Activated CD4-positive, alpha-beta T cell treated with anti-CD3 and anti-CD28 coated beads, Interleukin-2, amount 10 ng/mL, durations not matched to agents 7 days and 5 days (primary cell): ENCODE measurements at regions of chr1 and their contacts with region 1.

Region 1: GRCh38 chr1:11880181-11880575 is 21.4 kb upstream of the NPPB start:
- DNase-seq: no peak
- H3K4me3 Mint-ChIP-seq: no peak overlapping the region
- H3K27ac Mint-ChIP-seq: no peak overlapping the region
- H3K4me1 Mint-ChIP-seq: no peaks in the 10 kb centered on the region
- H3K27me3 Mint-ChIP-seq: peaks cover 2% of the 10 kb centered on the region

Region 2: DNA sequence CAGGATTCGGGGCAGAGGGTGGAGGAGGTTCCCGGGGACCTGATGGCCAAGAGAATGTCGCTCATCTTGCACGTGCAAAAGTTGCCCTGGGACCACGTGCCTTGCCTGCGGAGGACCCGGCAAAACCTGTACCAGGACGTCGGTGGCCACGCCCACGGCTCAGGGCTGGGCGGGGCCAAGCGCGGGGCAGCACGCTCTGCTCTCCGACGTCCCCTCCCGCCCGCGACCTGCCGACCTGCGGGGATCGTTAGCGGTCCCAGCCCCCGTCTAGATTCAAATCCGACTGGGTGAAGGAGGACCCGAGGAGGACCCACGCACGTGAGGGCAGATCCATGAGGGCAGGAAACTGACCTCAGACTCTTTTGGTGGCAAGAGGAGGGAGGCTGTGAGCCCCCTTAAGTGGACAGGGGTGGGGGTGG is 118.2 kb before region 1 on chr1 and contains the start of gene C1orf167:
- CTCF ChIA-PET with region 1: no interaction called
- POLR2A ChIA-PET with region 1: no interaction called
- DNase-seq: peak; percentile 29
- H3K4me3 Mint-ChIP-seq: no peak within 1 kb of the TSS
- H3K27ac Mint-ChIP-seq: no peak within 1 kb of the TSS
- H3K4me1 Mint-ChIP-seq: peaks cover 6% of the 10 kb centered on the region
- H3K27me3 Mint-ChIP-seq: peaks cover 25% of the 10 kb centered on the region
- total RNA-seq, gene C1orf167: not detected

Region 3: GRCh38 chr1:11790880-11791715 is 89.1 kb before region 1 on chr1:
- CTCF ChIA-PET with region 1: no interaction called
- POLR2A ChIA-PET with region 1: no interaction called
- DNase-seq: no peak
- H3K4me3 Mint-ChIP-seq: no peak overlapping the region
- H3K27ac Mint-ChIP-seq: no peak overlapping the region
- H3K4me1 Mint-ChIP-seq: peaks cover under 1% of the 10 kb centered on the region
- H3K27me3 Mint-ChIP-seq: no peaks in the 10 kb centered on the region

Region 4: DNA sequence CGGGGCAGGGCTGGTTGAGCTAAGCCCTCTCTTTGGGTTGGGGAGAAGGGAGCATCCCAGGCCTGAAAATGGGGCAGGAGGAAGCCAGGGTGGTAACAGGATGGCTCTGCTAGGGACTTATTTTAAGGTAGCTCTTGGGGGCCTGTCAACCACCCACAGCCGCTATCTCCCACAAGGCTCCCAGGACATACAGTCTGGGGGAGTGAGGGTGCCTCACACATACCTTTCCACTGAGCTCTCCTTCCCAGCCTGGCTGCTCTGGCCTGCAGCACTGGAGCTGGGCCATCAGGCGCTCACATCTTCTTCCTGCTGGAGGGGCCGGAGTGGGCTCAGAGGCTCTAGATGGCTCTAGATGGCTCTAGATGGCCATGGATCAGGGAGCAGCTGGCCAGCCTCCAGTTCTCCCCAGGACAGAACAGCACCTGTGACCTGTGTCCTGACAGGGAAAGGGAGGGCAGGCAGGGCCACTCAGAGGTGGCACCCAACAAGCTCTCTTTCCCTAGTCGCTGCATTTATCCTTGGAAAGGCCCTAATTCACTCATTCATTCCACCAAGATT is 10.4 kb before region 1 on chr1:
- CTCF ChIA-PET with region 1: interaction called, 10 read pairs
- POLR2A ChIA-PET with region 1: no interaction called
- DNase-seq: no peak
- H3K4me3 Mint-ChIP-seq: no peak overlapping the region
- H3K27ac Mint-ChIP-seq: no peak overlapping the region
- H3K4me1 Mint-ChIP-seq: no peaks in the 10 kb centered on the region
- H3K27me3 Mint-ChIP-seq: peaks cover 9% of the 10 kb centered on the region